ENCODE measurements at regions of chr5 and their contacts with region 1.

Region 1: DNA sequence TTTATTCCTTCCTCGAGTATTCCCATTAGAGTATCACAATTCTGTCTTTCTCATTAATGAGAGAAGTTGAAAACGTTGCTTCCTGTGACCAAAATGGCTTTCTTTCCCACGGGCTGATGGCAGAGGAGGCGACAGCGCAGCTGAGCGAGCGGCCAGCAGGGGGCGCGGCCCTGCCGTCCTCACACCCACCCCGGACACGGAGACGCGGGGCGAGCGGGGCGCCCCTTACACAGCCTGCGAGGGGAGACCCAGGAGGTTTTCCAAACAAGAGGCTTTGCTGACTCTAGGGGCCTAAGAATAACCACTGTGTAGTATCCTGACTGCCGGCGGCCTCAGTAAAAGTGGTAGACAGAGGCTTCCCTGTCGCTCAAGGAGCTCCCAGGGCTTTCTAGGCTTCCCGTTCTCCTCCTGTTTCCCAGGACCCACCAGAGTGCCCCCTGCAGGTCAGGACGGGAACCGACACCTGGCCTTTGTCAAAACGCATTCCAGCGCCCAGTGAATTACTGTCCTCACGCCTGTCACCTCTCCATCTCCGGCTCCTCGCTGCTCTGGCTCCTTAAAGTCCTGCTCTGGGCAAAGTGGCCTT is 27.3 kb upstream of the FGF1 start:
- DNase-seq: peak; percentile 79 to 90 (median 86)
- H3K4me3 ChIP-seq: peak overlapping the region; percentile 39 to 51
- H3K4me3 Mint-ChIP-seq: peak overlapping the region; percentile 59 to 78 (median 74)
- H3K27ac ChIP-seq: peak overlapping the region; percentile 23
- H3K27ac Mint-ChIP-seq: peak overlapping the region in 3 of 7 donors; percentile 22 to 72 (median 23)
- H3K4me1 ChIP-seq: peaks cover 11% of the 10 kb centered on the region
- H3K4me1 Mint-ChIP-seq: peaks cover 7 to 18% (median 10%) of the 10 kb centered on the region in 4 donors
- H3K27me3 ChIP-seq: no peaks in the 10 kb centered on the region
- H3K27me3 Mint-ChIP-seq: peaks cover 0 to 3% of the 10 kb centered on the region in 2 donors

Region 2: DNA sequence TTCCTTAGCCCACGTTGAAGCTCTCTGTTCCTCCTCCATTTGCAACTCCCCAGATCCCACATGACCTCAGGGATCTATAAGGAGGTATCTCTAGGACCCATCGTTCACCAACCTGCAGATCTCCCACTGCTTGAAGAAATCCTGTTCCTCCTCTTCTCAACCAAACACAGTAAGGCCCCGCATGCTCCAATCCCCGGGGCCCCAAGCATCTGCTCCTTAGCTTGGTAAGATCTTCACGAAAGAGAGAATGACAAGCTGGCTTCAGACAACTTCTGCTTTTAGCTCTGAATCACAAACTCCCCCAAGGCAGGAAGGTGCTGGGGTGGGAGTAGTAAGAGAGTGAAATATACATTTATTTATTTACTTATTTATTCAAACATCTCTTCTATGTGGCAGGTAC is 24.0 kb after region 1 on chr5:
- CTCF ChIA-PET with region 1: interaction called, 27 read pairs
- POLR2A ChIA-PET with region 1: no interaction called
- intact Hi-C with region 1: no loop called
- DNase-seq: no peak
- H3K4me3 ChIP-seq: no peak overlapping the region
- H3K4me3 Mint-ChIP-seq: no peak overlapping the region
- H3K27ac ChIP-seq: no peak overlapping the region
- H3K27ac Mint-ChIP-seq: no peak overlapping the region
- H3K4me1 ChIP-seq: peaks cover 28% of the 10 kb centered on the region
- H3K4me1 Mint-ChIP-seq: peaks cover 18 to 46% (median 29%) of the 10 kb centered on the region in 4 donors
- H3K27me3 ChIP-seq: no peaks in the 10 kb centered on the region
- H3K27me3 Mint-ChIP-seq: peaks cover 0 to 1% of the 10 kb centered on the region in 2 donors

Region 3: GRCh38 chr5:142862594-142862993 is 149.4 kb after region 1 on chr5:
- CTCF ChIA-PET with region 1: interaction called, 27 read pairs
- POLR2A ChIA-PET with region 1: interaction called, 4 read pairs
- intact Hi-C with region 1: loop called (anchors 1 kb)
- DNase-seq: no peak
- H3K4me3 ChIP-seq: no peak overlapping the region
- H3K4me3 Mint-ChIP-seq: no peak overlapping the region
- H3K27ac ChIP-seq: no peak overlapping the region
- H3K27ac Mint-ChIP-seq: no peak overlapping the region
- H3K4me1 ChIP-seq: peaks cover 6% of the 10 kb centered on the region
- H3K4me1 Mint-ChIP-seq: peaks cover 20 to 46% (median 29%) of the 10 kb centered on the region in 4 donors
- H3K27me3 ChIP-seq: no peaks in the 10 kb centered on the region
- H3K27me3 Mint-ChIP-seq: no peaks in the 10 kb centered on the region

Region 4: DNA sequence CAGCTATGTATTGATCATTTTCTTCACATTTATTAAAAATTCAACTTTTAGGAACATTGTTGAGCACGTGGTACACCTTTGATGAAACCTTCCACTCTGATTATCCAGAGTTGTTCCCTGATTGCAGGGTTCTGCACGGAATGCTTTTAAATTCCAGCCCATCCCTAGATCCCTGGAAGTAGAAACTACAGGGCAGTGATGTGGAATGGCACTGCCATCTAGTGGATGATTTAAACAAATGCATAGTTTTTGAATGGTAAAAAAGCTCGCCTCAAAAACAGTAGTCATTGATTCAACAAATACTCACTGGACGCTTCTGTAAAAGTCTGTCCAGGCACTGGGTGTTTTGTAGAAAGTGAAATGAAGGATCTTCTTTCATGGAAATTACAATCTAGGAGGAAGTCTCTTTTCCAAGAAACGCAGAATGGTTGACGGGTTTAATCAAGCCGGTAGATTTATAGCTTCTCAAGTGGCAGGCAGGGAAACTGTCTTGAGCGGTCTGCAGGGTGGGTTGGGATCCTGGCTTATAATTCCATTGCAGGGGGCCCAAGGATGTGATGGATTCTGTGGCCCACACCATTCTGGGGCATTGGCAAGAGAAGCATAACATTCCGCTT is 175.4 kb after region 1 on chr5:
- CTCF ChIA-PET with region 1: interaction called, 252 read pairs
- POLR2A ChIA-PET with region 1: interaction called, 5 read pairs
- intact Hi-C with region 1: loop called (anchors 1 kb)
- DNase-seq: peak in 4 of 5 donors; percentile 13 to 26 (median 20)
- H3K4me3 ChIP-seq: no peak overlapping the region
- H3K4me3 Mint-ChIP-seq: no peak overlapping the region
- H3K27ac ChIP-seq: no peak overlapping the region
- H3K27ac Mint-ChIP-seq: peak overlapping the region in 1 of 7 donors; percentile 39
- H3K4me1 ChIP-seq: no peaks in the 10 kb centered on the region
- H3K4me1 Mint-ChIP-seq: peaks cover 0 to 4% (median under 1%) of the 10 kb centered on the region in 4 donors
- H3K27me3 ChIP-seq: no peaks in the 10 kb centered on the region
- H3K27me3 Mint-ChIP-seq: no peaks in the 10 kb centered on the region

Region 5: DNA sequence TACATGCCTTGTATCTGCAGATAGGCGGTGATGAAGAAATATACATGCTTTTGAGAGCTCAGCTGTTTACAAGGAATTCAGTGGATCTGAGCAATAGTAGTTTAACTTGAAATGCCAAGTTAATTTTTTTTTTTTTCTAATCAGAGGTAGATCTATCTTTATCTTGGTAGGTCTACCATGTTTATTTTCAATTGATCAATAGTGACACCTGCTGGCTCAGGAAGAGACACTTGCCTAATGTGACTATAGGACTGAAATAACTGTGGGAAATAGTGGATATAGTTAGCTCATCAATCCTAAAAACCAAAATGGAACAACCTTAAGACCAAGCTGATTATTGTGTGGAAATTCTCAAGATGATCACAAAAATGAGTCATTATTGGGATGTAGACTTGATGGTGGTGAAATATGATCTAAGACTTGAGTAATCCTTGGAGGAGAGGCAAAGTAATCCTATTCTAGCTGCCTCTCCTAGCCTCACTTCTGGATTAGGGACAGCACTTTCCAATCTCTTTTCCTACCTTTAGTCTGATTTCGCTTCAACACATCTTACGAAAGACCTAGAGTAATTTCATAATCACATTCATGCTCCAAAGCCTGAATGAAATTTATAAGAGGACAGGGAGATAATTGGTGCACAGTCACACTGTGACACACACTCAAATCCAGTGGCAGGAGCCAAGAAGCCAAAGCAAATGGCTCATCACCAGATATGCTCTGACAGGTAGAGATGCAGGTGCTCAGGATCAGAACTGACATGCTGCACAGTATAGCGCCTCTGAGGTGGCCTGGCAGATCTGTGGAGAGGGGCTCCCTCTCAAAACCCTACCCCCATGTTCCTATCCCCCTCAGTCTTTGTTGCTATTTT is 1255.0 kb after region 1 on chr5:
- CTCF ChIA-PET with region 1: interaction called, 3 read pairs
- POLR2A ChIA-PET with region 1: no interaction called
- intact Hi-C with region 1: loop called (anchors 10 kb)
- DNase-seq: peak in 4 of 5 donors; percentile 14 to 24 (median 22)
- H3K4me3 ChIP-seq: no peak overlapping the region
- H3K4me3 Mint-ChIP-seq: no peak overlapping the region
- H3K27ac ChIP-seq: no peak overlapping the region
- H3K27ac Mint-ChIP-seq: no peak overlapping the region
- H3K4me1 ChIP-seq: no peaks in the 10 kb centered on the region
- H3K4me1 Mint-ChIP-seq: peaks cover 0 to 3% (median 0%) of the 10 kb centered on the region in 4 donors
- H3K27me3 ChIP-seq: no peaks in the 10 kb centered on the region
- H3K27me3 Mint-ChIP-seq: peaks cover 4 to 13% of the 10 kb centered on the region in 2 donors

Measured in CD4-positive, alpha-beta memory T cell (primary cell).